ENCODE measurements at regions of chrX and their contacts with region 1.

Region 1: GRCh38 chrX:118603981-118604380 is 108.4 kb downstream of the DOCK11 start:
- DNase-seq: peak; percentile 50
- H3K4me3 ChIP-seq: no peak overlapping the region
- H3K27ac ChIP-seq: no peak overlapping the region
- H3K4me1 ChIP-seq: no peaks in the 10 kb centered on the region
- H3K27me3 ChIP-seq: no peaks in the 10 kb centered on the region
- CTCF ChIP-seq: peak; percentile 54 to 69
- POLR2A ChIP-seq: no peak

Region 2: DNA sequence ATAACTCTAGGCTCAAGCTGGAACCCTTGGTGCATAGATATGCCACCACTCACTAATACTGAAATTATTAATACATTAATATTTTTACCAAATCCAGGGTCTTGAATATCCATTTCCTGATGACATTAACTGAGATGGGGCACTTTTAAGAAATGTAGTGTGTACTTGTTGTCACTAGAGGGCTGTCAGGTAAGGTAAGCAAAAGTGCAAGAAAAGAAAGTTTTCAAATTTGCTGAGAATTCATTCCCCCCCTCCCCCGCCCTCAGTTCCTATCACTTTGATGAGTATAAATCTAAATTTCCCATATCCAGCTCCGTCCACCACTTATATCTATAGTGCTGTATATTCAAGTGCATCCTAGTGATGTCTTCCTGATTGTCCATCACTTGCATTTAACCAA is 278.5 kb before region 1 on chrX:
- CTCF ChIA-PET with region 1: interaction called, 5 read pairs
- POLR2A ChIA-PET with region 1: no interaction called
- dilution Hi-C with region 1: no loop called
- intact Hi-C with region 1: loop called (anchors 5 kb)
- DNase-seq: peak; percentile 1
- H3K4me3 ChIP-seq: no peak overlapping the region
- H3K27ac ChIP-seq: no peak overlapping the region
- H3K4me1 ChIP-seq: no peaks in the 10 kb centered on the region
- H3K27me3 ChIP-seq: no peaks in the 10 kb centered on the region
- CTCF ChIP-seq: peak in 1 of 2 donors; percentile 8
- POLR2A ChIP-seq: no peak

Region 3: DNA sequence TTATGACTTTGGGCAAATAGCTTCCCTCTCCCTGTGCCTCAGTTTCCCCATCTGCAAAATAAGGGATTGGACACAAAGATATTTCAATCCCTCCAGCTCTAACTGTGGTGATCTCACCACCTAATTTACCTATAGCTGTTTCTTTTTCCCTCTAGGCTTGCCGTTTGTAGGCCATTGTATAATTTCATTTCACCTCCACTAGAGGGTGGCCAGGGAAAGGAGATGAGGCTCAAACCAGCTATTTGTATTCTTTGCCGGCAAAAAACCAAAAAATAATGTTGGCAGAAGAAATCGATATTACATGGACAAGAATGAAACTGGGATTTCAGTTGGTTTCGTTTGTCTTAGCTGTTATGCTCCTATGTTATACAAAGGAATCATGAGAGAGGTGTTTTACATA is 144.5 kb before region 1 on chrX:
- CTCF ChIA-PET with region 1: interaction called, 72 read pairs
- POLR2A ChIA-PET with region 1: no interaction called
- dilution Hi-C with region 1: no loop called
- intact Hi-C with region 1: loop called (anchors 1 kb)
- DNase-seq: peak; percentile 12
- H3K4me3 ChIP-seq: no peak overlapping the region
- H3K27ac ChIP-seq: no peak overlapping the region
- H3K4me1 ChIP-seq: no peaks in the 10 kb centered on the region
- H3K27me3 ChIP-seq: no peaks in the 10 kb centered on the region
- CTCF ChIP-seq: peak in 1 of 2 donors; percentile 29
- POLR2A ChIP-seq: no peak

Region 4: DNA sequence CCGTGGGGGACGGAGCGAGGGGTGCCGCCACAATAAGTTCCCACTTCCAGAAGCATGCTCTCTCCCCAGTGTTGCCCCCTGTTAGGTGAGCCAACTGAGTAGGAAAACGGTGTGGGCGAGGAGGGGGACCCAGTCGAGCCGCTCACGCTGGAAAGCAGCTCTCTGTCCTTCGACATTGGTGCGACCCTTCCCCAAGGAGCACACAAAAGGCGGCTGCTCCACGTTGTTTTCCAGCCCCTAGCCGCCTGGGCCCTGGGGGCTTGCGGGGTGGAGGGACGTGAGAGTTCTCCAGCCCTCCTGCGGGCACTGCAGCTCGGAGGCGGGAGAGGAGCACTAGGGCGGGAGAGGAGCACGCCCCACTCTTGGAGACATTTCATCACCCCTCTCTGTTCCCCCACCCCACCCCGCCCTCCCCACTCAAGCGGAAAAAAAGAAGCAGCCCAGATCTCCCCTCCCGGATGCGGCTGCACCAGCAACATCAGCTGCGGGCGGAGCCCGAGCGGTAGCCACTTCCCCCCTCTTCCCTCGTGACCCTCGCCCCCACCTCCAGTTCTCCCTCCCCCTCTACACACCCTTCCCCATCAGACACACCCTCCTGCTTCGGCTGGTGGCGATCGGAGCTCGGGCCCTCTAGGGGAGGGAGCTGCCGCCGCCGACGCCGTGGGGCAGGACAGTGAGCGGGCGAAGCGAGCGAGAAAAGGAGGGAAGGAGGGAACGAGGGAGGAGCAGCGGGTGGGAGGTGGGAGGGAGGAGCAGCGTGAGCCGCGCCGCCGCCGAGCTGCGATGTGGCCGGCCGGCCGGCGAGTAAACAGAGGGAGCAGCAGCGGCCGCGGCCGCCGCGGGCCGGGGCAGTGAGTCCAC is 108.7 kb before region 1 on chrX and contains the start of gene DOCK11:
- CTCF ChIA-PET with region 1: no interaction called
- POLR2A ChIA-PET with region 1: no interaction called
- dilution Hi-C with region 1: no loop called
- intact Hi-C with region 1: loop called (anchors 10 kb)
- DNase-seq: peak; percentile 43
- H3K4me3 ChIP-seq: peak within 1 kb of the TSS; percentile 25 to 54 (median 40)
- H3K27ac ChIP-seq: no peak within 1 kb of the TSS
- H3K4me1 ChIP-seq: peaks cover 3% of the 10 kb centered on the region
- H3K27me3 ChIP-seq: peaks cover 14 to 20% of the 10 kb centered on the region in 2 experiments
- CTCF ChIP-seq: no peak
- POLR2A ChIP-seq: no peak
- total RNA-seq, gene DOCK11: 0.58 and 0.86 TPM in 2 replicates

Region 5: GRCh38 chrX:119067023-119067739 is 463.2 kb after region 1 on chrX:
- CTCF ChIA-PET with region 1: no interaction called
- POLR2A ChIA-PET with region 1: no interaction called
- dilution Hi-C with region 1: no loop called
- intact Hi-C with region 1: loop called (anchors 5 kb)
- DNase-seq: peak; percentile 64
- H3K4me3 ChIP-seq: no peak overlapping the region
- H3K27ac ChIP-seq: no peak overlapping the region
- H3K4me1 ChIP-seq: no peaks in the 10 kb centered on the region
- H3K27me3 ChIP-seq: peaks cover 0 to 2% of the 10 kb centered on the region in 2 experiments
- CTCF ChIP-seq: peak; percentile 53 to 57
- POLR2A ChIP-seq: no peak

Measured in endothelial cell of umbilical vein (primary cell).